Cardiac septum (tissue), 1 donor: ENCODE measurements at regions of chr2 and their contacts with region 1.

Region 1: GRCh38 chr2:150379166-150379565 is 108.3 kb downstream of the RND3 start:
- DNase-seq: no peak

Region 2: GRCh38 chr2:150327564-150328489 is 51.3 kb before region 1 on chr2:
- intact Hi-C with region 1: no loop called
- DNase-seq: no peak

Region 3: DNA sequence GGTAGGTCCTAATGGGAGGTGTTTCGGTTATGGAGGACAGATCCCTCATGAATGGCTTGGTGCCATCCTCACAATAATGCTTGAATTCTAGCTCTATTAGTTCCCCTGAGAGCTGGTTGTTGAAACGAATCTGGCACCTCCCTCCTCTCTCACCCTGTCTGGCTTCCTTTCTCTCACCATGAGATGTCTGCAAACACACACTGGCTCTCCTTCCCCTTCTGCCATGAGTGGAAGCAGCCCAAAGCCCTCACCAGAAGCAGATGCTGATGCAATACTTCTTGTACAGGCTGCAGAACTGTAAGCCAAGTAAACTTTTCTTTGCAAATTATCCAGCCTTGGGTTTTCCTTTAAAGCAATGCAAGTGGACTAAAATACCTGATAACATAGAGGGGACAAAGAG is 21.7 kb after region 1 on chr2:
- intact Hi-C with region 1: loop called (anchors 2 kb)
- DNase-seq: no peak